Natural killer cell (primary cell): ENCODE measurements at regions of chr2 and their contacts with region 1.

Region 1: GRCh38 chr2:99180755-99181623 is at the starts of genes MITD1 and MRPL30:
- DNase-seq: peak; percentile 91 to 97
- ATAC-seq: peak; percentile 94 to 98 (median 97)
- H3K4me3 ChIP-seq: peak within 1 kb of the TSS; percentile 75
- H3K4me3 Mint-ChIP-seq: peak within 1 kb of the TSS; percentile 100
- H3K27ac ChIP-seq: peak within 1 kb of the TSS; percentile 74
- H3K27ac Mint-ChIP-seq: peak within 1 kb of the TSS; percentile 99 to 100
- H3K4me1 ChIP-seq: peaks cover 20% of the 10 kb centered on the region
- H3K4me1 Mint-ChIP-seq: peaks cover 58 to 62% of the 10 kb centered on the region in 2 donors
- H3K27me3 ChIP-seq: no peaks in the 10 kb centered on the region
- H3K27me3 Mint-ChIP-seq: no peaks in the 10 kb centered on the region
- CTCF ChIP-seq: no peak
- total RNA-seq, gene MITD1: 22.9 to 33.6 (median 26.7) TPM
- total RNA-seq, gene MRPL30: 16.0 to 18.6 (median 16.9) TPM

Region 2: GRCh38 chr2:98975611-98976010 is 205.4 kb before region 1 on chr2:
- intact Hi-C with region 1: no loop called
- DNase-seq: no peak
- ATAC-seq: no peak
- H3K4me3 ChIP-seq: no peak overlapping the region
- H3K4me3 Mint-ChIP-seq: no peak overlapping the region
- H3K27ac ChIP-seq: no peak overlapping the region
- H3K27ac Mint-ChIP-seq: no peak overlapping the region
- H3K4me1 ChIP-seq: no peaks in the 10 kb centered on the region
- H3K4me1 Mint-ChIP-seq: no peaks in the 10 kb centered on the region
- H3K27me3 ChIP-seq: no peaks in the 10 kb centered on the region
- H3K27me3 Mint-ChIP-seq: peaks cover 16 to 19% of the 10 kb centered on the region in 2 donors
- CTCF ChIP-seq: no peak

Region 3: DNA sequence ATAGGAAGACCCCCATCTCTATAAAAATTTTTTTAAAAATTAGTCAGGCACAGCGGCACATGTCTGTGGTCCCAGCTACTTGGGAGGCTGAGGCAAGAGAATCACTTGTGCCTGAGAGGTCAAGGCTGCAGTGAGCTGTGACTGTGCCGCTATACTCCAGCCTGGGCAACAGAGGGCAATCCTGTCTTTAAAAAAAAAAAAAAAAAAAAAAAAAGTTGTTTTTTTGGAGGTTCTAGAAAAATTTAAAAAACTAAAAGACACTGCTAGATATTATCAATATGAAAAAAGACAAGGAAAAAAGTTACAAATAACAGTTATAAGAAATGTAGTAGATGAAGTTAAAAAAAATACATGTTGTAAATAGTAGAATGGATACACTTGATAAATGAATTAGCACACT is 95.6 kb before region 1 on chr2:
- intact Hi-C with region 1: loop called (anchors 1 kb)
- DNase-seq: peak in 1 of 2 donors; percentile 42
- ATAC-seq: peak in 1 of 3 donors; percentile 42
- H3K4me3 ChIP-seq: no peak overlapping the region
- H3K4me3 Mint-ChIP-seq: no peak overlapping the region
- H3K27ac ChIP-seq: no peak overlapping the region
- H3K27ac Mint-ChIP-seq: no peak overlapping the region
- H3K4me1 ChIP-seq: no peaks in the 10 kb centered on the region
- H3K4me1 Mint-ChIP-seq: peaks cover 5 to 6% of the 10 kb centered on the region in 2 donors
- H3K27me3 ChIP-seq: peaks cover 6% of the 10 kb centered on the region
- H3K27me3 Mint-ChIP-seq: peaks cover 30 to 60% of the 10 kb centered on the region in 2 donors
- CTCF ChIP-seq: peak; percentile 50

Region 4: GRCh38 chr2:99141110-99142108 is 39.6 kb before region 1 on chr2 and contains the start of gene C2orf15:
- intact Hi-C with region 1: loop called (anchors 1 kb)
- DNase-seq: peak; percentile 85 to 98
- ATAC-seq: peak; percentile 89 to 97 (median 91)
- H3K4me3 ChIP-seq: peak within 1 kb of the TSS; percentile 96
- H3K4me3 Mint-ChIP-seq: peak within 1 kb of the TSS; percentile 97
- H3K27ac ChIP-seq: peak within 1 kb of the TSS; percentile 95
- H3K27ac Mint-ChIP-seq: peak within 1 kb of the TSS; percentile 96 to 100
- H3K4me1 ChIP-seq: peaks cover 9% of the 10 kb centered on the region
- H3K4me1 Mint-ChIP-seq: peaks cover 23 to 25% of the 10 kb centered on the region in 2 donors
- H3K27me3 ChIP-seq: no peaks in the 10 kb centered on the region
- H3K27me3 Mint-ChIP-seq: no peaks in the 10 kb centered on the region
- CTCF ChIP-seq: no peak
- total RNA-seq, gene C2orf15: 1.3 to 2.6 (median 1.9) TPM

Region 5: GRCh38 chr2:99154643-99155536 is 26.1 kb before region 1 on chr2 and contains the starts of genes LIPT1 and TSGA10:
- intact Hi-C with region 1: loop called (anchors 1 kb)
- DNase-seq: peak; percentile 90 to 97
- ATAC-seq: peak; percentile 89 to 97 (median 93)
- H3K4me3 ChIP-seq: peak within 1 kb of the TSS; percentile 85
- H3K4me3 Mint-ChIP-seq: no peak within 1 kb of the TSS
- H3K27ac ChIP-seq: peak within 1 kb of the TSS; percentile 92
- H3K27ac Mint-ChIP-seq: no peak within 1 kb of the TSS
- H3K4me1 ChIP-seq: peaks cover 15% of the 10 kb centered on the region
- H3K4me1 Mint-ChIP-seq: peaks cover 0 to 48% of the 10 kb centered on the region in 2 donors
- H3K27me3 ChIP-seq: no peaks in the 10 kb centered on the region
- H3K27me3 Mint-ChIP-seq: no peaks in the 10 kb centered on the region
- CTCF ChIP-seq: no peak
- total RNA-seq, gene LIPT1: 12.0 to 21.4 (median 17.3) TPM
- total RNA-seq, gene TSGA10: 8.4 to 16.0 (median 11.5) TPM

Region 6: DNA sequence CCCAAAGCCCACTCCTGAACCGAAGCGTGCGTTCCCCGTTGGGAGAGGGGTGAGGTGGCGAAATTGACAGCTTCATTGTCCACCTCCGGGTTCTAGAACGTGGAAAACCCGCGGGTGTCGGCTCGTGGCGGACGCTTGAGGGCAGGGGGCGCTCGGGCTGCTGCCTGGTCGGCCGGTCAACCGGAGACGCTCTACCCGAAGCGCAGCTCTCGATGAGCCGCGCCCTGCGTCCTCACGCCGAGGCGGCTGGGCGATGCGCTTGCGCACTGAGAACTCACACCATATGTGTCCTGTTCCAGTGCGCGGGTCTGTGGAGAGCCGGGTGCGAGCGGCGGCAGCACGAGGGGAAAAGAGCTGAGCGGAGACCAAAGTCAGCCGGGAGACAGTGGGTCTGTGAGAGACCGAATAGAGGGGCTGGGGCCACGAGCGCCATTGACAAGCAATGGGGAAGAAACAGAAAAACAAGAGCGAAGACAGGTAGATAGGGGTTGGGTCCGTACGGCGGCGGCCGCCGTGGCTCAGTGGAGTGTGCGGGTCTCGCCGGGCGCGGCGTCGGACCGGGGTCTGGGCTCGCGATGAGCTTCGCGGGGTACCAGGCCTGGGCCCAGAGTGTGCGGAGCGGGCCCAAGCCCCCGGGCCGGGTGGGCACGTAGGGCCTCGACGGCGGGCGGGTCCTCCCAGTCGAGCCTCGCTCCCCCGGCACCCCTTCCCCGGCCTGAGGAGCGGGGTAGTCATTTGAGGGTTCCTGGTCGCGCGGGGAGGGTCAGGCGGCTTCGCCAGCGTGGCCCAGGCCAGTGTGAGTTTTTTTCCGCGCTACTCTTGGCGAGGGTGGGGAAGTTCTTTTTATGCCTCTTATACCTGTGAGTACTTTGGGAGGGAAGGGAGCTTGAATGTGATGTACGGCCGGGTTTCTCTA is 156.4 kb after region 1 on chr2 and contains the start of gene EIF5B:
- intact Hi-C with region 1: loop called (anchors 1 kb)
- DNase-seq: peak; percentile 86 to 96
- ATAC-seq: peak; percentile 67 to 83 (median 72)
- H3K4me3 ChIP-seq: peak within 1 kb of the TSS; percentile 79
- H3K4me3 Mint-ChIP-seq: no peak within 1 kb of the TSS
- H3K27ac ChIP-seq: peak within 1 kb of the TSS; percentile 83
- H3K27ac Mint-ChIP-seq: no peak within 1 kb of the TSS
- H3K4me1 ChIP-seq: peaks cover 15% of the 10 kb centered on the region
- H3K4me1 Mint-ChIP-seq: peaks cover 12 to 32% of the 10 kb centered on the region in 2 donors
- H3K27me3 ChIP-seq: no peaks in the 10 kb centered on the region
- H3K27me3 Mint-ChIP-seq: no peaks in the 10 kb centered on the region
- CTCF ChIP-seq: peak; percentile 48
- total RNA-seq, gene EIF5B: 33.5 to 40.6 (median 40.3) TPM

Region 7: DNA sequence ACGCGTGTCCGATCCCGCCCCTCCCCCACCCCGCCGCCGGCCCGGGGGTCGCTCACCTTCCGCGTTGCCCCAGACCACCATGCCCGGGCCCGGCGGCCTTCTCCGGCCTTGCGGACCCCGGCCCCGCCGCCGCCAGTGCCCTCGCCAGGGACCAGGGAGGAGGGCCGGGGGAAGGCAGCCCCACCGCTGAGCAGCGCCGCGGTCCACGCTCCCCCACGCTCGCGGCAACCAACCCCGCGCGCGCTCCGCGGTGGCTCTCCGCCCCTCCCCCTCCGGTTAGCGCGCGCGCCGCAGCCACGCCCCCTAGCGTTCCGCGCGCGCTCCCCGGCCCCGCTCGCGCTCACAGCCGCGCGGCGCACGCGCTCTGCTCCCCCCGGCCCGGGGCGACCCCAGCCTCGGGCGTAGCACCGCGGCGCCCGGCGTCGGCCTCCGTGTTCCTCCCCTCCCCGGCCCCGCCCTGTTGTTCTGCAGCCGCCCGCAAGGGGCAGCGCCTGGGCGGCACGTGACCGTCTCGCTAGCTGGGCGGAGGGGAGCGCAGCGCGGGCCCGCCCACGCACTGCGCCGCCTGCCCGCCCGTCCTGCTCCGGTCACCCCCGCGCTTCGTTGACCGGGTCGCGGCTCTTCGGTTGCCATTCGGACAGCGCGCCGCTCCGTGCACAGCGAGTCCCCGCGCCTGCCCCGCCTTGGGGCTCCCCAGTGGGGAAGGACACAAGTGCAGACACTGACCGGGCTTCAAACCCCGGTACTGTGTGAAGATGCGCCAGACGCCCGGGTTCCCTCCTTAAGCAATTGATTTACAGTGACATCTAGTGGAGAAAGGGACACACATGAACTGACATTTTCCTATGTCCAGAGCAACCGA is 309.0 kb after region 1 on chr2 and contains the start of gene REV1:
- intact Hi-C with region 1: loop called (anchors 1 kb)
- DNase-seq: peak; percentile 92 to 97
- ATAC-seq: peak; percentile 80 to 93 (median 84)
- H3K4me3 ChIP-seq: peak within 1 kb of the TSS; percentile 84
- H3K4me3 Mint-ChIP-seq: peak within 1 kb of the TSS; percentile 98
- H3K27ac ChIP-seq: peak within 1 kb of the TSS; percentile 87
- H3K27ac Mint-ChIP-seq: peak within 1 kb of the TSS; percentile 95 to 97
- H3K4me1 ChIP-seq: peaks cover 10% of the 10 kb centered on the region
- H3K4me1 Mint-ChIP-seq: peaks cover 29 to 33% of the 10 kb centered on the region in 2 donors
- H3K27me3 ChIP-seq: no peaks in the 10 kb centered on the region
- H3K27me3 Mint-ChIP-seq: peaks cover 8 to 11% of the 10 kb centered on the region in 2 donors
- CTCF ChIP-seq: peak; percentile 79
- total RNA-seq, gene REV1: 34.7 to 49.1 (median 38.5) TPM